ENCODE measurements at regions of chr1 and their contacts with region 1.

Region 1: GRCh38 chr1:153658400-153659174 is at the start of gene SNAPIN:
- DNase-seq: peak; percentile 96
- total RNA-seq, gene SNAPIN: 62.1 TPM

Region 2: GRCh38 chr1:153633716-153634665 is 24.6 kb before region 1 on chr1 and contains the start of gene CHTOP:
- intact Hi-C with region 1: loop called (anchors 2 kb)
- DNase-seq: peak; percentile 99
- total RNA-seq, gene CHTOP: 90.4 TPM

Region 3: DNA sequence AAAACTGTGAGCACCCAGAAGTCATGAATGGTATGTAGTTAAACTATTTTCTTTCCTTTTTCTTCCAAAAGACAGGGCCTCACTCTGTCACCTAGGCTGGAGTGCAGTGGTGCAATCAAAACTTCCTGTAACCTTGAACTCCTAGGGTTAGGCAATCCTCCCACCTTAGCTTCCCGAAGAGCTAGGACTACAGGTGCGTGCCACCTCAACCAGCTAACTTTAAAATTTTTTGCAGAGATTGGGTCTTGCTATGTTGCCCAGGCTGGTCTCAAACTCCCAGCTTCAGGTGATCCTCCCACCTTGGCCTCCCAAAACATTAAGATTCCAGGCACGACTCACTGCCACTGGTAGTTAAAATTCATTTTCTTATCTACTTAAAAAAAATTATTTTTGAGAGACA is 201.7 kb after region 1 on chr1:
- intact Hi-C with region 1: no loop called
- DNase-seq: no peak